Right ventricle myocardium inferior (tissue), 1 donor: ENCODE measurements at regions of chr6 and their contacts with region 1.

Region 1: GRCh38 chr6:70706491-70707123 is 38.9 kb downstream of the SMAP1 start:
- DNase-seq: no peak
- ATAC-seq: no peak

Region 2: DNA sequence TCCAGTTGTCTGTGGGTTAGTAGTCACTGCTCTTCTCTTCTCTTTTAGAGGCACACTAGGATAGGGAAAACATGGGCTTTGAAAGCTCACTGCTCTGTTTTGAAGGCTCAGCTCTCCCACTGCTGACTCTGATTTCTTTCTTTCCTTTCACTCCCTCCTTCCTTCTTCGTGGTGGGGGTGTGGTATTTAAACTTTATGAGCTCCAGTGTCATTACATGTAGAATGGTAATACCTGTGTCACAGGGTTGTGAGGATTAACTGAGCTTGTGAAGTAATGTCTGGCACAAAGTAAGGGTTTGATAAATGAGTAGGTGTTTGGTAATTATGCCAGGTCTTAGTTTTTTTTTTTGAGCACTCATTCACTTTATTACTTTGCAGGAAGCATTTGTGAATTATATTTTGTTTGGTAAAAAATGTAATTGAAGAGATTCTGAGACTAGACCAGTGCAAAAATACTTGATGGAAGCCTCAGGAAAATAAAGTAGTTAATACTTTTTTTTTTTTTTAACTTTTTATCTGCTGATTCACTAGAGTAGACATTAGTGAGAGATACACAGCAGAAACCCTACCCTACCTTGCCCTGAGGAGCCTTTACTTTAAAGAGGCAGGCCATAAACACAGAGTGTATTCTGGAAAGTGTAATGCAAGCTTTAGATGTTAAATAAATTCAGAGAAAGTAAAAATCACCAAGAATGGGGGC is 21.7 kb before region 1 on chr6:
- intact Hi-C with region 1: no loop called
- DNase-seq: no peak
- ATAC-seq: no peak

Region 3: DNA sequence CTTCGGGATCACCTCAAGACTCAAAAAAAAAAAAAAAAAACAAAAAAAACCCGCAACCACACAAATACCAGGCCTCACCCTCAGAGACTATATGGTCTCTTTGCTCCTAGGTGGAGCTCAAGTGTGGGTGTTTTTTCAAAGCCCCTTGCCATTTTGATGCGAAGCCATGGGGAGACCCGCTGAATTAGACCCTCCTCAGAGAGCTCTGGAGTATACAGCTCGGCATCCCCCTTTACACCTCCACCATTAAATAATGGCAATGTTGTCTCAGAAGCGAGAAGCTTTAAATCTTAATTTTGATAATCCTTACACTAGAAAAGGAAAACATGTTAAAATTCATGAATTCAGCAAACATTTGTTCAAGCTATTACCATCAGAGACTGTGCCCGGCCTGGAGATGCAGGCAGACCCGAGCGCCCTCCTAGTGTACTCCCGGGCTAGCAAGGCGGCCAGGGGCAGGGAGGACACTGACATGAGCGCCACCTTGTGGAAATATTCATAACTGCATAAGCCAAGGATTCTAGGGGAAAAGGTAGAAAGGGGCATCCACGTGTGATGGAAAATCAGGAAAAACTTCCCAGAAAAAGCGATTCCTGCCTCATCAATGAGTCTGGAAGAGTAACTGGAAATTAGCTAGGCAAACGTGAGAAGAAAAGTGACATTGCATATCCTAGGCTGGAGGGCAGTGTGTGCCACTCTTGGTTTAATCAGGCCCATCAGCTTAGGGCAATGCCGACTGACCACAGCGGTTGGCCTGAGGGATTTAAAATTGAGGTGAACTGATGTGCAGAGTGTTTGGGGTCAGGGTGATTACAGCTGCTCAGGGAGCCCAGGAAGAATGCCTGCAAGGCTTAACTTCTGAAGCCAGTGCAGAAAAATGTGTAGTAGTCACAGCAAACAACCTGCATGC is 177.7 kb after region 1 on chr6:
- intact Hi-C with region 1: loop called (anchors 2 kb)
- DNase-seq: peak; percentile 82
- ATAC-seq: peak; percentile 77

Region 4: GRCh38 chr6:70955441-70956190 is 249.0 kb after region 1 on chr6:
- intact Hi-C with region 1: loop called (anchors 10 kb)
- DNase-seq: peak; percentile 93
- ATAC-seq: peak; percentile 92